PC-3 (cell line): ENCODE measurements at regions of chr4 and their contacts with region 1.

Region 1: GRCh38 chr4:52712172-52712990 is 38.8 kb downstream of the ERVMER34-1 start:
- DNase-seq: peak; percentile 98
- ATAC-seq: peak; percentile 98
- H3K4me3 ChIP-seq: peak overlapping the region; percentile 82
- H3K27ac ChIP-seq: peak overlapping the region; percentile 48
- H3K4me1 ChIP-seq: peaks cover 29% of the 10 kb centered on the region
- H3K27me3 ChIP-seq: no peaks in the 10 kb centered on the region
- CTCF ChIP-seq: no peak

Region 2: DNA sequence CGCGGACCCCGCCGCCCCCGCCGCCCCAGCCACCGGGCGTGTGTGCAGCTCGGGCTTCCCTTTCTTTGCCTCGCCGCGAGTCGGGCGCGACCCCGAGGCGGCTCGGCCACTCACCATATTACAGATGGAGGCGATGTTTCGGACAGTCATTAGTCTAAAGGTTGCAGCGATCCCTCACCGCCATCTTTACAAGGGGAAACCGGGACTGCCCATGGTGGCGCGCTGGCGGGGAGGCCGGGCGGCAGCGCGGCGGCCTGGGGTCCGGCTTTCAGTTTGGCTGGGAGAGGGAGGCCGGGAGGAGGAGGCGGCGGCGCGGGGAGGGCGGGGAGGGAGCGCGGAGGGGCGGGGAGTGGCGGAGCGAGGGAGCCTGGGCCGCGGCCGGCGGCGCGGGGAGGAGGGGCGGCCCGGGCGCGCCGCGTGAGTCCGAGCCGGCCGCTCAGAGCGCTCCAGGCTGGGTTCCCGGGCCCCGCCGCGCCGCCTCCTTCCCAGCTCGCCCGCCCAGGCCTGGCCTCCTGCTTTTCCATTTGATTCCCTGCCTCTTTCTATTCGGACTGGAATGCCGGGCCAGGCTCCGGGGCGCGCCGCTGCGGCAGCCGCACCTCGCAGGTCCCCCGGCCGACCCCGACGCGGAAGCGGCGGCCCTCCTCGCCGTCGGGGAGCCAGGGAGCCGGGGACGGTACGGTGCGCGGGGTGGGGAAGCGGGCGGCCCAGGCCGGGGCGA is 53.2 kb before region 1 on chr4 and contains the start of gene USP46:
- CTCF ChIA-PET with region 1: no interaction called
- POLR2A ChIA-PET with region 1: interaction called, 4 read pairs
- intact Hi-C with region 1: loop called (anchors 1 kb)
- DNase-seq: peak; percentile 77
- ATAC-seq: peak; percentile 89
- H3K4me3 ChIP-seq: peak within 1 kb of the TSS; percentile 90
- H3K27ac ChIP-seq: peak within 1 kb of the TSS; percentile 18; the same call in 1 of the 2 replicates
- H3K4me1 ChIP-seq: peaks cover 16% of the 10 kb centered on the region
- H3K27me3 ChIP-seq: no peaks in the 10 kb centered on the region
- CTCF ChIP-seq: no peak
- total RNA-seq, gene USP46: 9.2 and 9.4 TPM in 2 replicates

Region 3: GRCh38 chr4:52670739-52671138 is 41.6 kb before region 1 on chr4:
- CTCF ChIA-PET with region 1: no interaction called
- POLR2A ChIA-PET with region 1: no interaction called
- intact Hi-C with region 1: no loop called
- DNase-seq: no peak
- ATAC-seq: peak; percentile 50; the same call in 1 of the 2 replicates
- H3K4me3 ChIP-seq: no peak overlapping the region
- H3K27ac ChIP-seq: no peak overlapping the region
- H3K4me1 ChIP-seq: no peaks in the 10 kb centered on the region
- H3K27me3 ChIP-seq: no peaks in the 10 kb centered on the region
- CTCF ChIP-seq: peak; percentile 36

Region 4: GRCh38 chr4:52743444-52744019 is 31.2 kb after region 1 on chr4:
- CTCF ChIA-PET with region 1: no interaction called
- POLR2A ChIA-PET with region 1: interaction called, 15 read pairs
- intact Hi-C with region 1: no loop called
- DNase-seq: no peak
- ATAC-seq: no peak
- H3K4me3 ChIP-seq: no peak overlapping the region
- H3K27ac ChIP-seq: no peak overlapping the region
- H3K4me1 ChIP-seq: no peaks in the 10 kb centered on the region
- H3K27me3 ChIP-seq: no peaks in the 10 kb centered on the region
- CTCF ChIP-seq: no peak